K562 (cell line): ENCODE measurements at regions of chr3 and their contacts with region 1.

Region 1: GRCh38 chr3:55180936-55181535 is 253.2 kb upstream of the LRTM1 start:
- DNase-seq: peak; percentile 24 to 35 (median 28)
- ATAC-seq: no peak
- H3K4me3 ChIP-seq: no peak overlapping the region
- H3K27ac ChIP-seq: no peak overlapping the region
- H3K4me1 ChIP-seq: no peaks in the 10 kb centered on the region
- H3K27me3 ChIP-seq: no peaks in the 10 kb centered on the region
- CTCF ChIP-seq: peak in 2 of 3 experiments; percentile 48 to 59; a peak in 3 of 6 replicates
- EP300 ChIP-seq: no peak
- POLR2A ChIP-seq: no peak
- RAD21 ChIP-seq: peak in 1 of 2 experiments; percentile 26; a peak in 2 of 4 replicates

Region 2: GRCh38 chr3:54427941-54428871 is 752.8 kb before region 1 on chr3:
- CTCF ChIA-PET with region 1: no interaction called
- POLR2A ChIA-PET with region 1: no interaction called
- in situ Hi-C with region 1: no loop called
- intact Hi-C with region 1: loop called (anchors 5 kb)
- DNase-seq: peak; percentile 27 to 58 (median 36)
- ATAC-seq: peak; percentile 67
- H3K4me3 ChIP-seq: no peak overlapping the region
- H3K27ac ChIP-seq: no peak overlapping the region
- H3K4me1 ChIP-seq: no peaks in the 10 kb centered on the region
- H3K27me3 ChIP-seq: no peaks in the 10 kb centered on the region
- CTCF ChIP-seq: peak; percentile 54 to 69 (median 56)
- EP300 ChIP-seq: no peak
- POLR2A ChIP-seq: no peak
- RAD21 ChIP-seq: peak; percentile 47 to 60

Region 3: GRCh38 chr3:54951405-54951804 is 229.6 kb before region 1 on chr3:
- CTCF ChIA-PET with region 1: no interaction called
- POLR2A ChIA-PET with region 1: no interaction called
- in situ Hi-C with region 1: no loop called
- intact Hi-C with region 1: loop called (anchors 5 kb)
- DNase-seq: peak; percentile 5 to 25 (median 15)
- ATAC-seq: peak; percentile 84
- H3K4me3 ChIP-seq: no peak overlapping the region
- H3K27ac ChIP-seq: no peak overlapping the region
- H3K4me1 ChIP-seq: no peaks in the 10 kb centered on the region; a peak in 1 of 5 replicates
- H3K27me3 ChIP-seq: no peaks in the 10 kb centered on the region
- CTCF ChIP-seq: peak; percentile 32 to 69 (median 44); a peak in 4 of 6 replicates
- EP300 ChIP-seq: no peak
- POLR2A ChIP-seq: no peak
- RAD21 ChIP-seq: 0 out of 4 replicates have a peak, but pooled peaks have one; percentile 17 to 22